ENCODE measurements at regions of chr2 and their contacts with region 1.

Region 1: GRCh38 chr2:20051532-20052228 is at the start of gene LAPTM4A:
- DNase-seq: peak; percentile 99
- ATAC-seq: peak; percentile 98
- H3K4me3 Mint-ChIP-seq: no peak within 1 kb of the TSS
- H3K27ac Mint-ChIP-seq: no peak within 1 kb of the TSS
- H3K4me1 Mint-ChIP-seq: peaks cover 27% of the 10 kb centered on the region
- H3K27me3 Mint-ChIP-seq: peaks cover 11% of the 10 kb centered on the region
- total RNA-seq, gene LAPTM4A: 22.5 to 41.9 TPM

Region 2: GRCh38 chr2:19362755-19363473 is 688.8 kb before region 1 on chr2:
- CTCF ChIA-PET with region 1: no interaction called
- POLR2A ChIA-PET with region 1: no interaction called
- intact Hi-C with region 1: loop called in 1 of 2 experiments (anchors 5 kb)
- DNase-seq: peak; percentile 74
- ATAC-seq: peak; percentile 59
- H3K4me3 Mint-ChIP-seq: peak overlapping the region; percentile 88
- H3K27ac Mint-ChIP-seq: peak overlapping the region; percentile 65
- H3K4me1 Mint-ChIP-seq: peaks cover 30% of the 10 kb centered on the region
- H3K27me3 Mint-ChIP-seq: peaks cover 57% of the 10 kb centered on the region

Region 3: GRCh38 chr2:19819097-19820065 is 232.3 kb before region 1 on chr2:
- CTCF ChIA-PET with region 1: no interaction called
- POLR2A ChIA-PET with region 1: no interaction called
- intact Hi-C with region 1: no loop called
- DNase-seq: no peak
- ATAC-seq: no peak
- H3K4me3 Mint-ChIP-seq: no peak overlapping the region
- H3K27ac Mint-ChIP-seq: no peak overlapping the region
- H3K4me1 Mint-ChIP-seq: no peaks in the 10 kb centered on the region
- H3K27me3 Mint-ChIP-seq: peaks cover 10% of the 10 kb centered on the region

Region 4: GRCh38 chr2:19989681-19990415 is 61.8 kb before region 1 on chr2 and contains the start of gene WDR35:
- CTCF ChIA-PET with region 1: interaction called, 3 read pairs
- POLR2A ChIA-PET with region 1: no interaction called
- intact Hi-C with region 1: loop called (anchors 1 to 2 kb)
- DNase-seq: peak; percentile 95
- ATAC-seq: peak; percentile 97
- H3K4me3 Mint-ChIP-seq: peak within 1 kb of the TSS; percentile 90
- H3K27ac Mint-ChIP-seq: peak within 1 kb of the TSS; percentile 75
- H3K4me1 Mint-ChIP-seq: peaks cover 28% of the 10 kb centered on the region
- H3K27me3 Mint-ChIP-seq: peaks cover 12% of the 10 kb centered on the region
- total RNA-seq, gene WDR35: 6.2 to 7.4 TPM

Region 5: GRCh38 chr2:20097879-20098714 is 46.4 kb after region 1 on chr2:
- CTCF ChIA-PET with region 1: interaction called, 3 read pairs
- POLR2A ChIA-PET with region 1: interaction called, 3 read pairs
- intact Hi-C with region 1: loop called in 1 of 2 experiments (anchors 1 kb)
- DNase-seq: peak; percentile 88
- ATAC-seq: peak; percentile 97
- H3K4me3 Mint-ChIP-seq: no peak overlapping the region
- H3K27ac Mint-ChIP-seq: no peak overlapping the region
- H3K4me1 Mint-ChIP-seq: no peaks in the 10 kb centered on the region
- H3K27me3 Mint-ChIP-seq: peaks cover 15% of the 10 kb centered on the region

Region 6: GRCh38 chr2:20186078-20186854 is 134.6 kb after region 1 on chr2:
- CTCF ChIA-PET with region 1: no interaction called
- POLR2A ChIA-PET with region 1: no interaction called
- intact Hi-C with region 1: no loop called
- DNase-seq: no peak
- ATAC-seq: no peak
- H3K4me3 Mint-ChIP-seq: no peak overlapping the region
- H3K27ac Mint-ChIP-seq: no peak overlapping the region
- H3K4me1 Mint-ChIP-seq: no peaks in the 10 kb centered on the region
- H3K27me3 Mint-ChIP-seq: peaks cover 2% of the 10 kb centered on the region

Region 7: GRCh38 chr2:20650880-20651730 is 599.4 kb after region 1 on chr2 and contains the start of gene HS1BP3:
- CTCF ChIA-PET with region 1: no interaction called
- POLR2A ChIA-PET with region 1: no interaction called
- intact Hi-C with region 1: loop called in 1 of 2 experiments (anchors 2 kb)
- DNase-seq: peak; percentile 92
- ATAC-seq: peak; percentile 97
- H3K4me3 Mint-ChIP-seq: peak within 1 kb of the TSS; percentile 78
- H3K27ac Mint-ChIP-seq: peak within 1 kb of the TSS; percentile 86
- H3K4me1 Mint-ChIP-seq: peaks cover 22% of the 10 kb centered on the region
- H3K27me3 Mint-ChIP-seq: no peaks in the 10 kb centered on the region
- total RNA-seq, gene HS1BP3: 6.2 to 7.1 TPM

Measured in activated CD4-positive, alpha-beta T cell treated with anti-CD3 and anti-CD28 coated beads for 36 hours (primary cell).